SK-N-SH (cell line): ENCODE measurements at regions of chr7 and their contacts with region 1.

Region 1: DNA sequence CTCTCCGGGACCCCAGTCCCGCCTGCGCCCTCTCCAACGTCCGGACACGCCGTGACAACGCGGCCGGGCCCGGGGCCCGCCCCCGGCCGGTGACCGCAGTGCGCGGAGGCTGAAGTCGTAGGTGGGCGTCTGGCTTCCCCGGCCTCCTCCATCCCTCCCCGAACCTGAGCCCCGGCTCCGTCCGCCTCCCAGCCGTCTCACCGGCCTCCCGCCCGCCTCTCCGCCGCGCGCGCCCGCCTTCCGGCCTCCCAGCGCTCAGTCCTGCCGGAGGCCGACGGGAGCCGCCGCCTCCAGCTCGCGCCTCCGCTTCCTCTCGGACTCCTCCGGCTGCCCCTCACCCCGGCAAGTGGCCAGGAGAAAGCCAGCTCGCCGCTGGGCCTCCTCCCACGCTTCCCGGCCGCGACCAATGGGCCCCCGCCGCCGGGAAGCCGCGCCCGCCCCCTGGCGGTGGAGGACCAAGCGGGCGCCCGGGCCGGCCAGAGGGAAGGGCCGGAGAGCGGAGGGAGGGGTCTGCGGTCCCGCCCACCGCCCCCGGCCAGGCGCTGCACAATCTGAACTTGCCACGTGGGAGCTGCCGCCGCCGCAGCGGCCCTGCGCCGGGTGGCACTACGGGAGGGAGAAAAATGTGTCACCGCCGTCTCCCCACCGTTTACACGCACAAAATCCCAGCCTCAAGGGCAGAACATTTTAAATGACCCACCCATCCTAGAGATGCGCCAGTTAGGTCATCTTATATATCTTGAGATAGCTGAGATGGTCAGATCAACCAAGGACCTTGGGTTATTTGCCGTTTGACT is at the start of gene FAM3C:
- DNase-seq: peak; percentile 100
- H3K4me3 ChIP-seq: peak within 1 kb of the TSS; percentile 93 to 99
- H3K27ac ChIP-seq: peak within 1 kb of the TSS; percentile 73 to 88
- H3K4me1 ChIP-seq: peaks cover 0 to 11% of the 10 kb centered on the region in 2 experiments; a peak in 2 of 4 replicates
- H3K27me3 ChIP-seq: no peaks in the 10 kb centered on the region
- CTCF ChIP-seq: peak; percentile 90
- EP300 ChIP-seq: peak; percentile 32 to 44; a peak in 2 of 4 replicates
- RAD21 ChIP-seq: peak; percentile 43
- polyA plus RNA-seq, gene FAM3C: 80.0 and 111 TPM in 2 replicates

Region 2: DNA sequence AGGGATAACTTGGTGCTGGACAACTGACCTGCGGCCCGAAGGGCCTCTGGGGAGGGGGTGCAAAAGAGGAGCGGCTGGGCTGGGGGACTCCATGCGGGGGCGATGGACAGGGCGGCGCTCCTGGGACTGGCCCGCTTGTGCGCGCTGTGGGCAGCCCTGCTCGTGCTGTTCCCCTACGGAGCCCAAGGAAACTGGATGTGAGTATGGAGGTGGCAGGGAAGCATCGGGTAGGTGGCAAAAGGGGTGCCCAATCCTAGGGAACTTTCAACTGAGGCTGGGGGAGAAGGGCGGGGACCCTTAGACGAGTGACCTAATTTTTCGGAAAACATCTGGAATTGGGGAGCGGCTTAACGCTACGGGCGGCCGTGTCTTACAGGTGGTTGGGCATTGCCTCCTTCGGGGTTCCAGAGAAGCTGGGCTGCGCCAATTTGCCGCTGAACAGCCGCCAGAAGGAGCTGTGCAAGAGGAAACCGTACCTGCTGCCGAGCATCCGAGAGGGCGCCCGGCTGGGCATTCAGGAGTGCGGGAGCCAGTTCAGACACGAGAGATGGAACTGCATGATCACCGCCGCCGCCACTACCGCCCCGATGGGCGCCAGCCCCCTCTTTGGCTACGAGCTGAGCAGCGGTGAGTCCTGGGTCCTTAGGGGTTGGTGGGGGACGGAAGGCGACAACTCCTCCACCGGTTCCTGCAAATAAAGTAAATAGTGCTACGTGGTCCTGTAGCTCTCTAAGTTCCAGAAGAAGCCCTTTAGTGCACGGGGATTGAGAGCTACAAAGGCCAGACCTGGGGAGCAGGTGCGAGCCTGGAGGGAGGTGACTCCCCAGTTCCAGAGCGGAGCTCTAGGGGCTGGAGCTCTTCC is 66.7 kb before region 1 on chr7:
- CTCF ChIA-PET with region 1: interaction called, 15 read pairs
- POLR2A ChIA-PET with region 1: no interaction called
- DNase-seq: peak; percentile 78
- H3K4me3 ChIP-seq: peak overlapping the region; percentile 66
- H3K27ac ChIP-seq: peak overlapping the region in 1 of 2 experiments; percentile 56; a peak in 1 of 4 replicates
- H3K4me1 ChIP-seq: peaks cover 17 to 23% of the 10 kb centered on the region in 2 experiments; a peak in 3 of 4 replicates
- H3K27me3 ChIP-seq: peaks cover 50% of the 10 kb centered on the region
- CTCF ChIP-seq: peak; percentile 30
- EP300 ChIP-seq: no peak
- RAD21 ChIP-seq: peak; percentile 19; the same call in 1 of the 2 replicates

Region 3: DNA sequence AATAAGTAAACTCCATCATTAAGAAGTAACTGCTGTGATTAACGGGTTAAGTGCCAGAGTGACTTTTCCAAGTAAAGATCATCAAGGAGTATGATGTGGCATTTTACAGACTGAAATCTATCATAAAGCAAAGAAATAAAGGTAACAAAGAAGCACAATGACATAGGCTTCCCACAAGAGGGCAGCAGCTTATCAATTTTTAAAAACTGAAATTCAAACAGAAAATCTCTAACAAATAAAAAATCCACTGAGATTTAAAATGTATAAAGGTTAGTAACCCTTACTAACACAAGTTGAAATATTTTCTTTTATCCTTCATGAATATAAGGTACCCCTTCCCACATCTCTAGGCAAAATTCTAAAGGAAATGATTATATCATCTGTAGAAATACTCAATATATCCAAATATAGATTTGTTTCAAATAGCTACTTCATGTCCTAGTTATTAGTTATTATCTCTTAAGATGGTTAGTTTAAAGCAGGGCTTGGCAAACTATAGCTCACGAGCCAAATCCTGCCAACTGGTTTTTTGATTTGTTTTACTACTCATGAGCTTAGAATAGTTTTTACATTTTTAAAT is 29.2 kb before region 1 on chr7:
- CTCF ChIA-PET with region 1: interaction called, 48 read pairs
- POLR2A ChIA-PET with region 1: interaction called, 5 read pairs
- DNase-seq: peak; percentile 41
- H3K4me3 ChIP-seq: no peak overlapping the region
- H3K27ac ChIP-seq: peak overlapping the region; percentile 12 to 26; a peak in 3 of 4 replicates
- H3K4me1 ChIP-seq: peaks cover 0 to 22% of the 10 kb centered on the region in 2 experiments; a peak in 3 of 4 replicates
- H3K27me3 ChIP-seq: no peaks in the 10 kb centered on the region
- CTCF ChIP-seq: peak; percentile 99
- EP300 ChIP-seq: no peak
- RAD21 ChIP-seq: peak; percentile 94

Region 4: DNA sequence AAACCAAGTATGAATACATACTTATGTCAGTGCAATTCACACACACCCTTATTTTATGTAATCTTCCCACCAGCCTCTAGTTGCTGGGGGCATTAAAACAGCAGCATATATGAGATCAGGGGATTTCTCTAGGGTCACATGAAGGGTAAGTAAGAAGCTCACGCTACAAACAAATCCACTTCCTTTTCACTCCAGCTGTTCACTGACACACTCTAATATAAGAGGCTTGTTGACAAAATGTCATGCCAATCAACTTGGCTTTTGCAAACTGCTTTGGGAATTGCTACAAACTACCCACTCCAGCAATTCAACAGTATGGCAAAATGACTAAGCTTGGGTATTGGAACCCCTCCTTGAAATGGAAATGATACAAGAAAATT is 10.4 kb before region 1 on chr7:
- CTCF ChIA-PET with region 1: interaction called, 71 read pairs
- POLR2A ChIA-PET with region 1: interaction called, 6 read pairs
- DNase-seq: no peak
- H3K4me3 ChIP-seq: no peak overlapping the region
- H3K27ac ChIP-seq: no peak overlapping the region
- H3K4me1 ChIP-seq: peaks cover 2 to 29% of the 10 kb centered on the region in 2 experiments; a peak in 3 of 4 replicates
- H3K27me3 ChIP-seq: no peaks in the 10 kb centered on the region
- CTCF ChIP-seq: no peak
- EP300 ChIP-seq: no peak
- RAD21 ChIP-seq: no peak

Region 5: GRCh38 chr7:121420979-121421378 is 24.8 kb after region 1 on chr7:
- CTCF ChIA-PET with region 1: interaction called, 10 read pairs
- POLR2A ChIA-PET with region 1: no interaction called
- DNase-seq: no peak
- H3K4me3 ChIP-seq: no peak overlapping the region
- H3K27ac ChIP-seq: no peak overlapping the region
- H3K4me1 ChIP-seq: no peaks in the 10 kb centered on the region
- H3K27me3 ChIP-seq: no peaks in the 10 kb centered on the region
- CTCF ChIP-seq: no peak
- EP300 ChIP-seq: no peak
- RAD21 ChIP-seq: no peak

Region 6: DNA sequence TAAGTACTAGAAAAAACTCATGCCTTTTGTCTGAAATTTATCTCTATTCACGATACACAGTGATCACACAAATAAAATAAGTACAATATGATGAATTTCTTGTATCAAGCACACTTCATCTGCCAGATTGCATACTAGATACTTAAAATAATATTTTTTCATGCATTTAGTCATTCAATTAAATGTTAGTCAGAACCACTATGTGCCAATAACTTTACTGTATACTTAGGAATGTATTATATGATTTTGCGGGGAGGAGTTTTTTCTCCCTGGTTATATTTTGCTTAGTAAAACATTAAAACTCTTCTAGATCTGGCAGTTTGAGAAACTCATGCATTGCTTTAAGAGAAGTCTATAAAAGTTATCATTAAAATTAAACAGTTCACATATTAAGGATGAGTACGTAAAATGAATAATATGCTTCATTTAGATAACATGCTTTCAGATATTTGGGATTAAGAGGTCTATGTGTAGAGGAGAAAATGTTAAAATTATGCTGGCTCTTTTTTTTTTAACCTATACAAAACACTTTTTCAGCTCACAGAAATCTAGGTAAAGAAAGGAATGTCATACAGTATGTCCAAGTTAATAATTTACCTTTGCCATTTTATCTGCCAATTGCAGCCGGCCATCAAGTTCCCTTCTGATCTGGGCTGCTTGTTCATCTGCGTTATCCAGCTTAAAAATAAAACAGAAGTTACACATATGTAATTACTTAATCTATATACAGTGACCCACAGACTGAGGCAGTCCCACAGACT is 1232.7 kb after region 1 on chr7:
- CTCF ChIA-PET with region 1: no interaction called
- POLR2A ChIA-PET with region 1: no interaction called
- DNase-seq: no peak
- H3K4me3 ChIP-seq: no peak overlapping the region
- H3K27ac ChIP-seq: no peak overlapping the region
- H3K4me1 ChIP-seq: no peaks in the 10 kb centered on the region
- H3K27me3 ChIP-seq: no peaks in the 10 kb centered on the region
- CTCF ChIP-seq: no peak
- EP300 ChIP-seq: no peak
- RAD21 ChIP-seq: no peak